Mammary epithelial cell (primary cell): ENCODE measurements at regions of chr1 and their contacts with region 1.

Region 1: GRCh38 chr1:3453203-3453761 is 1.2 kb upstream of the ARHGEF16 start:
- DNase-seq: peak; percentile 56
- H3K4me3 ChIP-seq: no peak overlapping the region
- H3K27ac ChIP-seq: no peak overlapping the region
- H3K4me1 ChIP-seq: peaks cover 11% of the 10 kb centered on the region
- H3K27me3 ChIP-seq: no peaks in the 10 kb centered on the region
- CTCF ChIP-seq: peak; percentile 80 to 97

Region 2: DNA sequence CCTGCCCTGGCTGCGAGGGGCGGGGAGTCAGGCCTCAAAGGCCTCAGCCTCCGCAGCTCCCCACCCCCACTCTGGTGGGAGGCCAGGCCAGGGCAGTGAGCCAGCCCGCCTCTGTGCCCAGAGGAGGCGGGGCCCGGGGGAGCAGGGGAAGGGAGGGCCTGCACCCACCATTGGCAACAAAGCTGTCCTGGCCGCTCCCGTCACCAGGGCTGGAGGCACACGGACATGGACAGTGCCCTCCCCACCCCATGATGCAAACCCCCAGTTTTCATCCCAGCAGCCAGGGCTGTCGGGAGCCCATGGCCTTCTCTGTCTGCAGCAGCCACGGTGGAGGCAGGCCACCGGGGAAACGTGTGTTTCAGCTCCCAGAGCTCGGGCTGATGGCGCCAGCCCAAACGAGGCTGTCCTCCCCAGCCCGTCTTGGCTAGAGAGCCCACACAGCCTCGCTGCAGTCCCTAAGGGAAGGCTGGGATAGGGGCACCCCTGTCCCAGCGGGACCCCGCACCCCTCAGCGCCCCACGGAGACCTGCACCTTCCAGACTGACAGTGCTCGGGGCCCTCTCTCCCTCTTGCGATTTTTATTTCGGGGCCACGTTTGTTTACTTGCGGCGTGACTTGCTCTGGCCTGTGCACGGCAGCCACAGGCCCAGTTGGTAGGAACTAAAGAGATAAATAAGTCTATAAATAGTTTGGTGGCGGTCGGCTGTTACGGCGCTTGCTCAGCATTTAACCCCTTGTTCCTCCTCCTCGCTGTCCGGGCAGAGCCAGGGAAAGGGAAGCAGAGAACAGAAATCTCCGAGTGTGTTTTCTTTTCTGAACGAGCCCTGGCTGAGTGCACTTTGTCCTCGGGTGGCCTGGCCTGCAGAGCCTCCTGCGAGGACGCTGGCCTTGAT is 282.5 kb before region 1 on chr1:
- CTCF ChIA-PET with region 1: no interaction called
- dilution Hi-C with region 1: no loop called
- in situ Hi-C with region 1: no loop called
- intact Hi-C with region 1: no loop called
- DNase-seq: no peak
- H3K4me3 ChIP-seq: no peak overlapping the region
- H3K27ac ChIP-seq: no peak overlapping the region
- H3K4me1 ChIP-seq: no peaks in the 10 kb centered on the region
- H3K27me3 ChIP-seq: no peaks in the 10 kb centered on the region
- CTCF ChIP-seq: no peak

Region 3: DNA sequence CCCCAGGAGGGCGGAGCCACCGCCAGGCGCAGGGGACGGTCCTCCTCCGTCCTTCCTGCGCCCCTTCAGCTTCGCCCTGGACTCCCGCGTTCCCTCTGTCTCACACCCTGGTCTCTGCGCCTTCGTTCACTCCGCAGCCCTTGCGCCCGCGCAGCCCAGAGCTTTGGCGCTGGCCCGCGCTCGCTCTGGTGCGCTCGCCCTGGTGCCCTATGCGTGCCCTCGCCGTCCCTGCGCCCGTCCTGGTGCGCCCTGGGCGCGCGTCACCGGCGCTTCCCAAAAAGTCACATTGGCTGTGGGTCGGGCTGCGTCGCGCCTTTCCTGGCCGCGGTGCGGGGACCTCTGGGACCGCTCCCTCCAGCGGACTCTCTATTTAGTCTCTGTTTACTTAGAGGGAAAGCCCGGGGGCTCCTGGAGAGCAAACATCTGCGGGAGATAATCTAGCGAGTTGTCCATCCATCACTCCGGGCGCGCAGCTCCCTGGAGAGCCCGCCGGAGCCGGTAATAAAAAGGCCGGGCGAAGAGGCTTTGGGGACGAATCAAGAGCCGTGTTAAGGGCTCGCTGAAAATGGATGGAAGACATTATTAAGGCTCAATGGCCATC is 205.7 kb before region 1 on chr1:
- CTCF ChIA-PET with region 1: no interaction called
- dilution Hi-C with region 1: no loop called
- in situ Hi-C with region 1: no loop called
- intact Hi-C with region 1: no loop called
- DNase-seq: peak; percentile 2
- H3K4me3 ChIP-seq: no peak overlapping the region
- H3K27ac ChIP-seq: no peak overlapping the region
- H3K4me1 ChIP-seq: no peaks in the 10 kb centered on the region
- H3K27me3 ChIP-seq: peaks cover 2% of the 10 kb centered on the region
- CTCF ChIP-seq: no peak

Region 4: DNA sequence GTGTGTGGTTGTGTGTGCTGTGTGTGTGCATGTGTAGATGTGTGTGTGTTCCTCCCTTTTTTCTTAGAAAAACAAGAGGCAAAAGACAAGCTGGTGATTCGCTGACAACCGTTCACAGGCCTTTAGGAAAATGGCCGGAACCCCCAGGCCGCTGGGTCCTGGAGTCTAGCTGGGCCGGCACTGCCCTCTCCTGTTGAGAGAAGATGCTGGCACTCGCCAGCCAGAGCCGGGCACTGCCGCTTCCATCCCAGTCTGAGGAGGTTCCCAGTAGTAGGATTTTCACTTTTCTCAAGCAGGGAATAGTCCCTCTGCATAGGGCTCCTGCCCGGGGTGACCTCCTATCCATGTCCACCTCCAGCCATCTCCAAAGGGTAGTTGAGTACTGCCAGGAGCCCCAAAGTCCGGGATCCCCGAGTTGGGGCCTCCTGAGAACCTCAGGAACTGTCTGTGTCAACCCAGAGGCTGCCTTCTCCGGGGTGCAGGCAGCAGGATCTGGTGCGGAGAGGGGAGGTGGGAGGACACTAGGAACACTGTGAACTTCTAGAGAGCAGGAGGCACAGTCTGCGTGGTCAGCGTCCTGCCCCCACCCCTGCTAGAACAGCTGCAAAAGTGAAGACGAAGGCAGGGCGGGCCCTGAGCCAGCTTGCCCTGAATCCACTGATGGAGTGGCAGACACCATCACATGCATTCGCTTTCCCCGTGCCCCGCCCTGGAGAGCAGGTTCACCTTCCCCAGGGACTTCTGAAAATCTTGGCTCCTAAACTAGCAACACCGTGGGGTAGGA is 42.9 kb before region 1 on chr1:
- CTCF ChIA-PET with region 1: no interaction called
- dilution Hi-C with region 1: no loop called
- in situ Hi-C with region 1: no loop called
- intact Hi-C with region 1: no loop called
- DNase-seq: peak; percentile 24
- H3K4me3 ChIP-seq: no peak overlapping the region
- H3K27ac ChIP-seq: no peak overlapping the region
- H3K4me1 ChIP-seq: peaks cover 1% of the 10 kb centered on the region
- H3K27me3 ChIP-seq: no peaks in the 10 kb centered on the region
- CTCF ChIP-seq: peak; percentile 6 to 59

Region 5: GRCh38 chr1:3504822-3505153 is 51.5 kb after region 1 on chr1:
- CTCF ChIA-PET with region 1: interaction called, 3 read pairs
- dilution Hi-C with region 1: loop called (anchors 5 kb)
- in situ Hi-C with region 1: no loop called
- intact Hi-C with region 1: no loop called
- DNase-seq: no peak
- H3K4me3 ChIP-seq: no peak overlapping the region
- H3K27ac ChIP-seq: no peak overlapping the region
- H3K4me1 ChIP-seq: no peaks in the 10 kb centered on the region
- H3K27me3 ChIP-seq: peaks cover 5% of the 10 kb centered on the region
- CTCF ChIP-seq: no peak

Region 6: GRCh38 chr1:3618881-3619671 is 165.8 kb after region 1 on chr1:
- CTCF ChIA-PET with region 1: interaction called, 6 read pairs
- dilution Hi-C with region 1: no loop called
- in situ Hi-C with region 1: loop called in 1 of 2 experiments (anchors 10 kb)
- intact Hi-C with region 1: loop called (anchors 1 kb)
- DNase-seq: peak; percentile 48
- H3K4me3 ChIP-seq: no peak overlapping the region
- H3K27ac ChIP-seq: no peak overlapping the region
- H3K4me1 ChIP-seq: peaks cover 9% of the 10 kb centered on the region
- H3K27me3 ChIP-seq: no peaks in the 10 kb centered on the region
- CTCF ChIP-seq: peak; percentile 70 to 80

Region 7: DNA sequence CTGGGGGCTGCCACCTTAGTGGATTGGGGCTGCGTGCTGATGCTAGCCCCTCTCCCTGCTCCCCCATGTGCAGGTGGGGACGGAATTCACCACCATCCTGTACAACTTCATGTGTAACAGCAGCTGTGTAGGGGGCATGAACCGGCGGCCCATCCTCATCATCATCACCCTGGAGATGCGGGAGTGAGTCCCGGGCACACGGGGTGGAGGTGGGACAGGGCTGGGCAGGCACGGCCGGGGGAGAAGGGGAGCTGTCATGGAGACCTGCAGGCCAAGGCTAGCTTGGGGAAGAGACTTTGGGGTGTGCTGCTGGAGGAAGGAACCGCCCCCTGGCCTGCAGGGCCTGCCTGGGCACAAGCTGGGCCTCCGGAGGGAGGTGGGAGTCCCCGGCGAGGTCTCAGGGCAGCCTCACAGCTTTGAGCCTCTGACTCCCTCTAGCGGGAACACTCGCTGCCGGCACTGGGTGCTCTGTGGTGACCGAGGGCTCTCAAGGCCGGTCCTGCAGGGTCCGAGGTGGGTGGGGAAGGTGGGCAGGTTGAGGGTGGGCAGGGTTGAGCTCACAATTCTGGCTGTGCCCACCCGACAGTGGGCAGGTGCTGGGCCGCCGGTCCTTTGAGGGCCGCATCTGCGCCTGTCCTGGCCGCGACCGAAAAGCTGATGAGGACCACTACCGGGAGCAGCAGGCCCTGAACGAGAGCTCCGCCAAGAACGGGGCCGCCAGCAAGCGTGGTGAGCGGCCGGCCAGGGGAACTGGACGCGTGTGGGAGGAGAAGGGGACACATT is 274.0 kb after region 1 on chr1:
- CTCF ChIA-PET with region 1: interaction called, 45 read pairs
- dilution Hi-C with region 1: no loop called
- in situ Hi-C with region 1: no loop called
- intact Hi-C with region 1: loop called (anchors 10 kb)
- DNase-seq: no peak
- H3K4me3 ChIP-seq: no peak overlapping the region
- H3K27ac ChIP-seq: no peak overlapping the region
- H3K4me1 ChIP-seq: no peaks in the 10 kb centered on the region
- H3K27me3 ChIP-seq: no peaks in the 10 kb centered on the region
- CTCF ChIP-seq: no peak